ENCODE measurements at regions of chr15 and their contacts with region 1.

Region 1: DNA sequence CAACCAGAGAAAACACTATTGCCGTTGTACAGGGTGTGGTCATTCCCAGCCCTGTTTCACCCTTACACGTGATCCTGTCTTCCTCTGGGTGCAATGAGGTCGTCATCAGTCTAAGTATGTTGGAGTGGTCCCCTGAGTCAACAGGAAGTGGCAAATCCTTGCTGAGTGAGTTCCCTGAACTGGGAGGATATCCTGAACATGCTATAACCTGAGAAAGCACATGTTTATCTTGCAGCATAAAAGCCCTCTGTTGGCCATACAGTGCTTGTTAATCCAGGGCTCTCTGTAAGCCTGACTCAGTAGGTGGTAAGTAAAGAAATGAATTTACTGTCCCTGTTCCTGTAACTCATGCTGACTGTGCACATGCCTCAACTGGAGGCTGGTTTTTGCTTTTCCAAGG is 477.8 kb upstream of the RGMA start:
- DNase-seq: no peak
- H3K4me3 ChIP-seq: no peak overlapping the region
- H3K27ac ChIP-seq: no peak overlapping the region
- H3K4me1 ChIP-seq: no peaks in the 10 kb centered on the region
- H3K27me3 ChIP-seq: no peaks in the 10 kb centered on the region
- CTCF ChIP-seq: no peak
- POLR2A ChIP-seq: no peak

Region 2: DNA sequence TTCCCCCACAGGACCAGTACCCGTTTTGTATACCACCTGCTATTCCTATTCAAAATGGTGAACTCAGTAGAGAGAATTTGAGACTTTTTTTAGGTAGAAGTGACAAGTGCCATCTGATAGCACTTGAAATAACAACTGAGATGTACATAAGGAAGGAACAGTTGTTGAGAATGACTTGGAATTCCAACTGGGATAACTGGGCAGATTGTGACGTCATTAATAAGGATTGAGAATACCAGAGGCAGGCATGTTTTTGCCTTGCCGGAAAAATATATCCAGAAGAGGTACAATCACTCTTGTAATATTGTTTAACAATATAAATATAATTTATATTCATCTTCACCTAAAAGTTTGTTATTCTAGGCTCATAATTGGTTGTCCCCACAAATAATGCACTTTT is 23.7 kb before region 1 on chr15:
- intact Hi-C with region 1: loop called (anchors 2 kb)
- DNase-seq: no peak
- H3K4me3 ChIP-seq: no peak overlapping the region
- H3K27ac ChIP-seq: no peak overlapping the region
- H3K4me1 ChIP-seq: no peaks in the 10 kb centered on the region
- H3K27me3 ChIP-seq: no peaks in the 10 kb centered on the region
- CTCF ChIP-seq: no peak
- POLR2A ChIP-seq: no peak

Measured in breast epithelium (tissue), 4 donors.